Activated CD8-positive, alpha-beta T cell treated with anti-CD3 and anti-CD28 coated beads for 36 hours (primary cell): ENCODE measurements at regions of chr22 and their contacts with region 1.

Region 1: GRCh38 chr22:39319270-39320022 is at the start of gene RPL3:
- DNase-seq: peak; percentile 96
- ATAC-seq: peak; percentile 83
- H3K4me3 Mint-ChIP-seq: peak within 1 kb of the TSS; percentile 99
- H3K27ac Mint-ChIP-seq: peak within 1 kb of the TSS; percentile 100
- H3K4me1 Mint-ChIP-seq: peaks cover 31% of the 10 kb centered on the region
- H3K27me3 Mint-ChIP-seq: no peaks in the 10 kb centered on the region
- CTCF ChIP-seq: no peak
- total RNA-seq, gene RPL3: 3,563 to 3,599 TPM

Region 2: GRCh38 chr22:38872172-38872830 is 447.1 kb before region 1 on chr22 and contains the start of gene CBX6:
- CTCF ChIA-PET with region 1: interaction called, 3 read pairs
- POLR2A ChIA-PET with region 1: interaction called, 10 read pairs
- intact Hi-C with region 1: no loop called
- DNase-seq: peak; percentile 95
- ATAC-seq: peak; percentile 64
- H3K4me3 Mint-ChIP-seq: peak within 1 kb of the TSS; percentile 92
- H3K27ac Mint-ChIP-seq: peak within 1 kb of the TSS; percentile 94
- H3K4me1 Mint-ChIP-seq: peaks cover 58% of the 10 kb centered on the region
- H3K27me3 Mint-ChIP-seq: no peaks in the 10 kb centered on the region
- CTCF ChIP-seq: no peak
- total RNA-seq, gene CBX6: 97.7 to 99.4 TPM

Region 3: GRCh38 chr22:39215426-39216120 is 103.9 kb before region 1 on chr22:
- CTCF ChIA-PET with region 1: interaction called, 14 read pairs
- POLR2A ChIA-PET with region 1: no interaction called
- intact Hi-C with region 1: no loop called
- DNase-seq: peak; percentile 58
- ATAC-seq: peak; percentile 93
- H3K4me3 Mint-ChIP-seq: no peak overlapping the region
- H3K27ac Mint-ChIP-seq: no peak overlapping the region
- H3K4me1 Mint-ChIP-seq: peaks cover 6% of the 10 kb centered on the region
- H3K27me3 Mint-ChIP-seq: peaks cover 20% of the 10 kb centered on the region
- CTCF ChIP-seq: peak; percentile 47

Region 4: GRCh38 chr22:39277155-39277607 is 42.3 kb before region 1 on chr22:
- CTCF ChIA-PET with region 1: no interaction called
- POLR2A ChIA-PET with region 1: no interaction called
- intact Hi-C with region 1: no loop called
- DNase-seq: no peak
- ATAC-seq: no peak
- H3K4me3 Mint-ChIP-seq: no peak overlapping the region
- H3K27ac Mint-ChIP-seq: no peak overlapping the region
- H3K4me1 Mint-ChIP-seq: peaks cover 2% of the 10 kb centered on the region
- H3K27me3 Mint-ChIP-seq: peaks cover 4% of the 10 kb centered on the region
- CTCF ChIP-seq: no peak

Region 5: DNA sequence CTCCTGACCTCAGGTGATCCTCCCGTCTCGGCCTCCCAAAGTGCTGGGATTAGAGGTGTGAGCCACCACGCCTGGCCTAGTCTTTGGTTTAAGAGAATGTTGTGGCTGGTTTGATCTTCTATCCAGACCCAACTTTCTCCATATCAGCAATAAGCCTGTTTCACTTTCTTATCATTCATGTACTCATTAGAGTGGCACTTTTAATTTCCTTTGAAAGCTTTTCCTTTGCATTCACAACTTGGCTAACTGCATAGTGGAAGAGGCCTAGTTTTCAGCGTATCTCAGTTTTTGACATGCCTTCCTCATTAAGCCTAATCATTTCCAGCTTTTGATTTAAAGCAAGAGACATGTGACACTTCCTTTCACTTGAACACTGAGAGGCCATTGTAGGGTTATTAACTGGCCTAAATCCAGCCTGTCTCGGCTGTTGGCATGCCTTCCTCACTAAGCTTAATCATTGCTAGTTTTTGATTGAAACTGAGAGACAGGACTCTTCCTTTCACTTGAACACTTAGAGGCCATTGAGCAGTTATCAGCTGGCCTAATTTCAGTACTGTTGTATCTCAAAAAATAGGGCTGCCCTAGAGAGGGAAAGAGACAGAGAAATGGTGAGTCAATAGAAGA is 13.1 kb after region 1 on chr22:
- CTCF ChIA-PET with region 1: interaction called, 31 read pairs
- POLR2A ChIA-PET with region 1: interaction called, 47 read pairs
- intact Hi-C with region 1: no loop called
- DNase-seq: no peak
- ATAC-seq: peak; percentile 34
- H3K4me3 Mint-ChIP-seq: no peak overlapping the region
- H3K27ac Mint-ChIP-seq: no peak overlapping the region
- H3K4me1 Mint-ChIP-seq: peaks cover 16% of the 10 kb centered on the region
- H3K27me3 Mint-ChIP-seq: no peaks in the 10 kb centered on the region
- CTCF ChIP-seq: no peak

Region 6: DNA sequence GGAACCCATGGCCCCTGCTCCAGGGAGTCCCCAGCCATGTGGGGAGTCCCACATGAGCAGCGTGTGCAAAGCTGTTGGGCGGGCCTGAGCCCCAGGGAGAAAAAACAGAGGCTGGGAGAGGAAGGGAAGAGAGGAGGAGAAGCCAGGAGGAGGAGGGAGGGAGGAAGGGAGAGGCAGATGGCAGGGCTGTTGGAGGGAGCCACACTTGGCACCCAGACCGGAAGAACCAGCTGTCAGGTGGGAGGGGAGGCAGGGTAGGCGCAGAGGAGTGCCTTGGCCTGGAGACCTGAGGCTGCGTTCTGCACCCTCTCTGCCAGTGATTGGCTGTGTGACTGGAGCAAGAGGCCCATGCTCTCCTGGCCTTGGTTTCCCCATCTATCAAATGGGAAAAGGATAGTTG is 37.0 kb after region 1 on chr22:
- CTCF ChIA-PET with region 1: interaction called, 3 read pairs
- POLR2A ChIA-PET with region 1: interaction called, 10 read pairs
- intact Hi-C with region 1: no loop called
- DNase-seq: no peak
- ATAC-seq: no peak
- H3K4me3 Mint-ChIP-seq: no peak overlapping the region
- H3K27ac Mint-ChIP-seq: no peak overlapping the region
- H3K4me1 Mint-ChIP-seq: no peaks in the 10 kb centered on the region
- H3K27me3 Mint-ChIP-seq: no peaks in the 10 kb centered on the region
- CTCF ChIP-seq: no peak

Region 7: GRCh38 chr22:39446295-39446721 is 126.9 kb after region 1 on chr22:
- CTCF ChIA-PET with region 1: no interaction called
- POLR2A ChIA-PET with region 1: interaction called, 15 read pairs
- intact Hi-C with region 1: no loop called
- DNase-seq: no peak
- ATAC-seq: peak; percentile 47
- H3K4me3 Mint-ChIP-seq: no peak overlapping the region
- H3K27ac Mint-ChIP-seq: peak overlapping the region; percentile 79
- H3K4me1 Mint-ChIP-seq: peaks cover 21% of the 10 kb centered on the region
- H3K27me3 Mint-ChIP-seq: peaks cover 1% of the 10 kb centered on the region
- CTCF ChIP-seq: no peak